ENCODE measurements at regions of chr17 and their contacts with region 1.

Region 1: DNA sequence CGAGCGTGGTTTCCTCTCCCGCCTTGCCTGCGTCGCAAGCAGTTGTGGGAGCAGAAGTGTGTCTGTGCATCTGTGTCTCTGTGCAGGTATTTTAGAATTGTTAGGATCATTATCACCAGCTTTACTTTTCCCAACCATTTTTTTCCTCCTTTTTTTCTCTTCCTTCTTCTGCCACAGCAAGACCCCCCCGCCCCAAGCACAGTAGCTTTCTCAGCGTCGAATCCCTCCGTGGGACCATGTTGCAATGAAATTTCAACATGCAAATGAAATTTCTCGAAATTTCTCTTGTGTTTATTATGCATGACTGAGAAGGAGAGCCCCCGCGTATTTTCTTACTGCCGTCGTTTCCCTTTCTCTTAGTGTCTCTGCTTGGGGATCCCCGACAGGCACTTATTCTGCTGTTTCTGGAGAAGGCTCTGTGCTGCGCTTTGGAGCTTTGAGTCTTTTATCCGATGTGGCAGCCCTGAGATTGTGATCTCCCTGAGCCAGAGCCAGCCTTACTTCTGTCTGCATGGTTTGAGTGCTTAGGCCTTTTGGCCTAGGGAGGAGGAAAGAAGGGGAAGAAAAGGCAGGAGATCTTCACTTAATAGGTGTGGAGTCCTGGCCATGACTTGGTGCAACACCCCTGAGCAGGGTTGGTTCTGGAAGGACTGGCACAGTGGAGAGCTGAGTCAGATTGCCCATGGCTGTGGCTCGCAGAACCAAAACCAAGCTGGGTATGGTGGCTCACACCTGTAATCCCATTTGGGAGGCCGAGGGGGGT is 5.0 kb downstream of the ARMC7 start:
- DNase-seq: no peak
- ATAC-seq: no peak
- H3K4me3 ChIP-seq: peak overlapping the region; percentile 14 to 69 (median 56)
- H3K27ac ChIP-seq: peak overlapping the region; percentile 55 to 93 (median 88)
- H3K4me1 ChIP-seq: peaks cover 0 to 45% (median 26%) of the 10 kb centered on the region in 12 donors
- H3K27me3 ChIP-seq: no peaks in the 10 kb centered on the region
- CTCF ChIP-seq: no peak
- POLR2A ChIP-seq: no peak

Region 2: GRCh38 chr17:74892974-74893911 is 221.5 kb before region 1 on chr17 and contains the start of gene FADS6:
- intact Hi-C with region 1: no loop called
- DNase-seq: no peak
- ATAC-seq: peak in 1 of 4 donors; percentile 43
- H3K4me3 ChIP-seq: peak within 1 kb of the TSS in 10 of 12 donors; percentile 13 to 46 (median 36)
- H3K27ac ChIP-seq: no peak within 1 kb of the TSS
- H3K4me1 ChIP-seq: peaks cover 0 to 12% (median 8%) of the 10 kb centered on the region in 12 donors
- H3K27me3 ChIP-seq: peaks cover 21 to 63% (median 40%) of the 10 kb centered on the region in 9 donors
- CTCF ChIP-seq: no peak
- POLR2A ChIP-seq: no peak
- total RNA-seq, gene FADS6: not detected

Region 3: DNA sequence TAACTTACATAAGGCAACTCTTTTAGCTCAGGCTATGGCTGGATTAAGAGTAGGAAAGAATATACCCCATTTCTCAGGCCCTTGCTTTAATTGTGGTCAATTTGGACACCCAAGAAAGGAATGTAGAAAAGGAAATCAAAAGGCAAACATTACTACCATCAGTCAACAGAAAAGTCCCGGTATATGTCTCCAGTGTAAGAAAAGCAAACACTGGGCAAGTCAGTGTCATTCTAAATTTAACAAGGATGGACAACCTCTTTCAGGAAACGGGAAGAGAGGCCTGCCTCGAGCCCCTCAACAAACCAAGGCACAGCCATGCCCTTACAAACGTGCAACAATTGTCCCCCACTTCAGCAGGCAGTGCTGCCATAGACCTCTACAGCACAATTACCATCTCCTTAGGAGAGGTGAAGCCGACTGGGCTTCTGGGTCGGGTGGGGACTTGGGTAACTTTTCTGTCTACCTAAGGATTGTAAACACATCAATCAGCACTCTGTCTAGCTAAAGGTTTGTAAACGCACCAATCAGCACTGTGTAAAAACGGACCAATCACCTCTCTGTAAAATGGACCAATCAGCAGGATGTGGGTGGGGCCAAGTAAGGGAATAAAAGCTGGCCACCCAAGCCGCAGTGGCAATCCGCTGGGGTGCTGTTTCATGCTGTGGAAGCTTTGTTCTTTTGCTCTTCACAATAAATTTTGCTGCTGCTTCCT is 89.9 kb before region 1 on chr17:
- intact Hi-C with region 1: no loop called
- DNase-seq: no peak
- ATAC-seq: no peak
- H3K4me3 ChIP-seq: no peak overlapping the region
- H3K27ac ChIP-seq: no peak overlapping the region
- H3K4me1 ChIP-seq: peaks cover 0 to 15% (median 0%) of the 10 kb centered on the region in 12 donors
- H3K27me3 ChIP-seq: no peaks in the 10 kb centered on the region
- CTCF ChIP-seq: no peak
- POLR2A ChIP-seq: no peak

Region 4: GRCh38 chr17:75173526-75173925 is 58.8 kb after region 1 on chr17:
- intact Hi-C with region 1: loop called in 8 of 10 experiments (anchors 2 to 10 kb)
- DNase-seq: no peak
- ATAC-seq: no peak
- H3K4me3 ChIP-seq: no peak overlapping the region
- H3K27ac ChIP-seq: no peak overlapping the region
- H3K4me1 ChIP-seq: peaks cover 0 to 20% (median 6%) of the 10 kb centered on the region in 12 donors
- H3K27me3 ChIP-seq: no peaks in the 10 kb centered on the region
- CTCF ChIP-seq: no peak
- POLR2A ChIP-seq: no peak

Region 5: GRCh38 chr17:75199886-75200618 is 85.3 kb after region 1 on chr17:
- intact Hi-C with region 1: loop called (anchors 1 to 10 kb)
- DNase-seq: no peak
- ATAC-seq: no peak
- H3K4me3 ChIP-seq: no peak overlapping the region
- H3K27ac ChIP-seq: no peak overlapping the region
- H3K4me1 ChIP-seq: peaks cover 0 to 11% (median 6%) of the 10 kb centered on the region in 12 donors
- H3K27me3 ChIP-seq: no peaks in the 10 kb centered on the region
- CTCF ChIP-seq: no peak
- POLR2A ChIP-seq: no peak

Measured in heart left ventricle (tissue), 16 donors.